Calu3 (cell line): ENCODE measurements at regions of chr17 and their contacts with region 1.

Region 1: GRCh38 chr17:50055426-50056230 is at the start of gene ITGA3:
- DNase-seq: peak; percentile 98
- H3K4me3 Mint-ChIP-seq: peak within 1 kb of the TSS; percentile 82
- H3K27ac Mint-ChIP-seq: peak within 1 kb of the TSS; percentile 96
- H3K4me1 Mint-ChIP-seq: peaks cover 74% of the 10 kb centered on the region
- H3K27me3 Mint-ChIP-seq: no peaks in the 10 kb centered on the region
- CTCF ChIP-seq: no peak
- total RNA-seq, gene ITGA3: 539 and 709 TPM in 2 replicates

Region 2: DNA sequence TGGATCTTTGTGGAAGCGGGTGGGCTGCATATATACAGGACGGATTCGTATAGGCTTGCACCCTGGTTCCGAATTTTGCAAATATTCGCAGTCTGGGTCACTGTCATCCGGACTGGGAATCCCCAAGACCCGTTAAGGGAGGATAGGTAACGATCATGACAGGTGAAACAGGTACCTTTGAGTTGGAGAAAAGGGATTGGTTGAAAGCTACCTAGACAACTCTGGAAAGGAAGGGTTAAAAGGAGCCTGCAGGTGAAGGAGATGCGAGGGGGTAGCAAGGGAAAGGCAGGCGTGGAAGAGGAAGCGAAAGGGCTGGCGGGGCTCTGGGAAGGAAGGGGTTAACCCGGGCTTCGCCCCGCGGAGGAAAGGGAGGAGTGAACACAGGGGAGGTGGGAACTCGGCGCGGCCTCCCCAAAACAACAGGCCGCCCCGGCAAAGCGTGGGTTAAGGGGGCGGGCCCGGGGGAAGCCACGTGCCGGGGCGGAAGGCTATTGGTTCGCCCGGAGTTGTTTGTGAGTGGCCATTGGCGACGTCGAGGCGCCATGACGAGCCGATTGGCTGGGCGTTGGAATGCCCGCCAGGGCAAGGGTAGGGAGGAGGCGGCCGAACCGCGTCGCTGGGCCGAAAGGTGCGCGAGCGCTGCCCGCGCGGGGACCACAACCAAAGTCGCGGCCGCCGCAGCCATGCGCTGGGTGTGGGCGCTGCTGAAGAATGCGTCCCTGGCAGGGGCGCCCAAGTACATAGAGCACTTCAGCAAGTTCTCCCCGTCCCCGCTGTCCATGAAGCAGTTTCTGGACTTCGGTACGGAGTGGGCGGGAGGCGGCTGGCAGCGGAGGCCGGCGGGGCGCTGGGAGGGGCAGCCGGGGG is 39.4 kb after region 1 on chr17 and contains the start of gene PDK2:
- CTCF ChIA-PET with region 1: interaction called, 7 read pairs
- intact Hi-C with region 1: loop called (anchors 5 kb)
- DNase-seq: peak; percentile 98
- H3K4me3 Mint-ChIP-seq: peak within 1 kb of the TSS; percentile 90
- H3K27ac Mint-ChIP-seq: peak within 1 kb of the TSS; percentile 89
- H3K4me1 Mint-ChIP-seq: peaks cover 48% of the 10 kb centered on the region
- H3K27me3 Mint-ChIP-seq: no peaks in the 10 kb centered on the region
- CTCF ChIP-seq: no peak
- total RNA-seq, gene PDK2: 29.5 and 39.1 TPM in 2 replicates